Esophagus muscularis mucosa (tissue), 4 donors: ENCODE measurements at regions of chr4 and their contacts with region 1.

Region 1: DNA sequence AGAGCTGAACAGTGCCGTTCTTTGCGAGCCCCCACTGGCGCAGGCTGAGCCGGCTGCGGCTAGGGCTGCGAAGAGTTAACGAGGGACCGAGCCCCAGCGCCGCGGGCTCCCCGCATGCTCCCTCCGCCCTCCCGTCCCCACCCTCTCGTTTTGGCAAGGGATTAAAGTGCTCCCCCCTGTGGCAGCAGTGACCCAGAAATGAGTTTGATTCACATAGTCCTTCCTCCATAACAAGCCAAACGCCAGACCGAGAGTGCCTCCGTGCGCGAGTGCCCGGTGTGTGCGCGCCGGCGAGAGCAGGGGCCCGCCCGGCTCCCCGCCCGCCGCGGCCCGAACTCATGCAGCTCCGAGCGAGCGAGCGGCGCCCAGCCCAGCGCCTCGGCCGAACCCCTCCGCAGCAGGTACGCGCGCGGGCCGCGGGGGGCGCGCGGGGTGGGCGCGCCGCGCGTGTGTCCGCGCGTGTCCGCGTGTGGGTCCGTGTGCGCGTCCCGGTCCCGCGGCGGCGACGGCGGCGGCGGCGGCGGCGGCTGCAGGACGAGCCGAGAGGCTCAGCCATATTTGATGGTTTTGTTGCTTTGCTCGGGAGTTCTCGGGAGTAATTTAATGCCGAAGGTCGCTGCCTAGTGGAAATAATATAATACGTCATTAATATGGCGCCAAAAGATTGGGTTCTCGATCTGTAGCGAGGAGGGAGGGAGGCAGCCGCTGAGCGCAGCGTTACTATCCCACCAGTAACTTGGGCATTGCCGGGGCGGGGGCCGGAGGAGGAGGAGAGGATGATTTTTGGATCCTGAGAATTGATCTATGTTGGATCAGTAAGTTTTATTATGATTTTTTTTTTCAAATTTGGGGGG is at the start of gene JADE1:
- DNase-seq: peak; percentile 98
- H3K4me3 ChIP-seq: peak within 1 kb of the TSS; percentile 83 to 91 (median 87)
- H3K27ac ChIP-seq: peak within 1 kb of the TSS; percentile 90 to 95 (median 93)
- H3K4me1 ChIP-seq: peaks cover 0 to 29% (median 21%) of the 10 kb centered on the region in 4 donors
- H3K27me3 ChIP-seq: no peaks in the 10 kb centered on the region
- CTCF ChIP-seq: peak; percentile 57 to 62 (median 60)
- EP300 ChIP-seq: no peak
- POLR2A ChIP-seq: no peak
- total RNA-seq, gene JADE1: 40.8 to 60.1 (median 52.0) TPM

Region 2: DNA sequence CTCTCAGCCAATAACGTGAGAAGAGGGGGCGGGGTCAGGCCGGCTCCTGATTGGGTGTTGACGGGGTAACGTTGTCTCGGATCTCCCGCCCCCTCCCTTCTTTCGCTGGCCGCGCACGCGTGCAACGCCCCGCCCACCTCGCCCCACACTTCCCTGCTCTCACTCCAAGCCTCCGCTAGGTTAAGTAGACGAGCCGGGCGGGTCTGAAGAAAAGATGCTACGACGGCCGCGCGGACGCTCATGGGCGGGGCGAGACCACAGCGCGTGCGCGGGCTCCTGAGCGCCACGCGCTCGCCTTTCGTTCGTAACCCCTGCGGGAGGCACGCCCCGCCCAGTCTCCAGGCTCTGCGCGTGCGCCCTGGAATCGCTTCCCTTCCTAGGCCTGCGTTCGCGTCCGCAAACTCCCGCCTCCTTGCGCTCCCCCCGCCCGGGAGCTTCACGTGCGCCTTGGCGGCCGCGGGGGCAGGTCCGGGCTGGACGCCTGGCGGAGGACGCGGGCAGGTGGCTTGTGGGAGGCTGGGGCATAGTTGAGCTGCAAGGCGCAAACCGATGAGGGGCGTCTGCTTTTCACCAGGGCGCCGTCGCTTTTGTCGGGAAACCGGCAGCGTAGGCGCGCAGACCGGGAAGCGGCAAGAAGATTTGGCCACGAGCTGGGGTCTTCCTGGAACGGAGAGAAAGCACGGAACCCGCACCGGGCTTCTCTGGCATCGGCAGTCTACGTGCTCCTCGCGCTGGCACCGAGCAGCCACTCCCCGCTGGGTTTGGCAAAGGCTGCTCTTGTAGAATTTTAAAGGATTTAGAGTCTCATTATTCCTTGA is 521.6 kb before region 1 on chr4:
- intact Hi-C with region 1: loop called (anchors 5 kb)
- DNase-seq: peak; percentile 100
- H3K4me3 ChIP-seq: peak overlapping the region; percentile 81 to 96 (median 87)
- H3K27ac ChIP-seq: peak overlapping the region; percentile 94 to 97 (median 95)
- H3K4me1 ChIP-seq: peaks cover 26 to 38% (median 33%) of the 10 kb centered on the region in 4 donors
- H3K27me3 ChIP-seq: no peaks in the 10 kb centered on the region
- CTCF ChIP-seq: peak in 2 of 3 experiments; percentile 35 to 41
- EP300 ChIP-seq: peak; percentile 70
- POLR2A ChIP-seq: peak; percentile 63

Region 3: GRCh38 chr4:128454281-128455075 is 355.2 kb before region 1 on chr4:
- intact Hi-C with region 1: loop called (anchors 2 kb)
- DNase-seq: peak; percentile 94
- H3K4me3 ChIP-seq: no peak overlapping the region
- H3K27ac ChIP-seq: peak overlapping the region in 2 of 4 donors; percentile 13 to 28
- H3K4me1 ChIP-seq: peaks cover 11 to 25% (median 18%) of the 10 kb centered on the region in 4 donors
- H3K27me3 ChIP-seq: no peaks in the 10 kb centered on the region
- CTCF ChIP-seq: peak; percentile 77 to 83 (median 82)
- EP300 ChIP-seq: no peak
- POLR2A ChIP-seq: no peak

Region 4: GRCh38 chr4:128663336-128663735 is 146.4 kb before region 1 on chr4:
- intact Hi-C with region 1: loop called (anchors 5 kb)
- DNase-seq: no peak
- H3K4me3 ChIP-seq: no peak overlapping the region
- H3K27ac ChIP-seq: no peak overlapping the region
- H3K4me1 ChIP-seq: peaks cover 25 to 43% (median 39%) of the 10 kb centered on the region in 4 donors
- H3K27me3 ChIP-seq: no peaks in the 10 kb centered on the region
- CTCF ChIP-seq: no peak
- EP300 ChIP-seq: no peak
- POLR2A ChIP-seq: no peak

Region 5: GRCh38 chr4:128924951-128925350 is 115.2 kb after region 1 on chr4:
- intact Hi-C with region 1: no loop called
- DNase-seq: no peak
- H3K4me3 ChIP-seq: no peak overlapping the region
- H3K27ac ChIP-seq: no peak overlapping the region
- H3K4me1 ChIP-seq: no peaks in the 10 kb centered on the region
- H3K27me3 ChIP-seq: no peaks in the 10 kb centered on the region
- CTCF ChIP-seq: no peak
- EP300 ChIP-seq: no peak
- POLR2A ChIP-seq: no peak